Kidney (tissue), 22 donors: ENCODE measurements at regions of chr18 and their contacts with region 1.

Region 1: DNA sequence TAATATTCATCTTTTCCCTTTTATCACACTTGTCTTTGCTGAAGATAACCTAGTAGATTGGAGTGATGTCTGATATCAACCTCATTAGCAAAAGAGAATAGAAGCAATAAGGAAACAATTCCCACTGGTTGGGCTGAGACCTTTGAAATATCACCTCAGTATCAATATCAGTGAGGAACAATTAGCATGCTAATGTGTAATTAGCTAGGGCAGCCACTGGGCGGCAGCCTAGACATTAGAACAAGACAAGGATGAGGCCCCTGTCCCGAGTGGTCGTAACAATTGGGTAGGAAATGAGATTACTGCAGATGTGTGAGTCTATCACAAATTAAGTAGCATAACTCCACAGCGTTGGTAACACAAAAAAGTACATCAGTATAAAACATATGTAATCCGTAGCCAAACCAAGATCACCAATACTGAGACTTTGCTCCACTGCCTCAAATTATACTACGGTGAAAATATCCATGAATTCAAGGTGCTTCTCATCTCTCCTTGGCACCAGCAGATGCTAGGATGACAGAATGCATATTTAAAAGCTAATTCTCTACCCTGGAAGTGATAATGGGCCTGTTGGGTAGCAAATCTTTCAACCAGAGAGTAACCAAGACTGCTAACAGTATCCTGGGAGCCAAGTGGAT is 99.1 kb downstream of the ALPK2 start:
- DNase-seq: peak in 4 of 5 donors; percentile 44 to 67 (median 58)
- H3K4me3 ChIP-seq: no peak overlapping the region
- H3K27ac ChIP-seq: no peak overlapping the region
- H3K4me1 ChIP-seq: peaks cover 0 to 31% (median 7%) of the 10 kb centered on the region in 3 donors
- H3K27me3 ChIP-seq: no peaks in the 10 kb centered on the region
- CTCF ChIP-seq: peak; percentile 87

Region 2: DNA sequence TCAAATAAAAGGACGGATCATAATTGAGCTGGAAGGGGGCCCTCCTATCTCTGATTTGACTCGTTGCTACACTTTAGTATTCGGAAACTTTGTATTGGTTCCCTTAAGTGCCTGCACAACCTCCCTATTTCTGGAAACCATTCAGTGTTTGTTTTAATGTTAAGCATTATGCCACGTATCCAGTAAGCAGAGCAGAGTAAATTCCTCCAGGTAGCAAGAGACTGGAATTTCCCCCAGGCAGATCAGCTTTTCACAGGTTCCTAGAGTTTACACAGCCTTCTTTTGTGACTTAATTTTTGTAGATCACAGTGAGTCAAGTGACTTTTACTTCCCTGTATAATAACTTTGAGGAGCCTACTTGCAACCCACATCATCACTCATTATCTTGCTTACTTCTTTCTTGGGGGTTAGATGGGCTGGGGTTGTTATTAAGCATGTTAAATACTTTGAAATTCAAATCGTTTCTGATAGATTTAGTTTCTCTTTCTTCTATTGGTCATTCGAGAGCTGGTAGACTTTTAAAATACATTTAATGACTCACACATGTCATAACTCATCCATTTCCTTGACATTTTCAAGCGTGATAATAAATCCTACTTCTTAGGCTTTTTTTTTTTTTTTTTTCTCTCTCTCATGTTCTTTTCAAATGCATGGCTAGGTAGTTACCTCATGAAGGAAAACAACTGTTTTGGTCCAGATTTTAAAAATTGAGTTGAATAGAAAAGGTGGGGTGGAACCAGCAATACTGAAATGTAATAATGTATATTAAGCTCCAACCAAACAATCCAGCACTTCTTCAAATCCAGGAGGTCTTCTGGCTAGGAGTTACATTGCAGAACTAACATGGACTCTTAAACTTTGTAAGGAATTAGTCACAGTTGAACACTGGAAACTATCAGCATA is 266.5 kb before region 1 on chr18:
- intact Hi-C with region 1: no loop called
- DNase-seq: peak in 3 of 5 donors; percentile 36 to 80 (median 72)
- H3K4me3 ChIP-seq: peak overlapping the region in 1 of 3 donors; percentile 19
- H3K27ac ChIP-seq: peak overlapping the region; percentile 27 to 76
- H3K4me1 ChIP-seq: peaks cover 0 to 38% (median 11%) of the 10 kb centered on the region in 3 donors
- H3K27me3 ChIP-seq: no peaks in the 10 kb centered on the region
- CTCF ChIP-seq: no peak

Region 3: GRCh38 chr18:58578835-58579560 is 49.2 kb after region 1 on chr18:
- intact Hi-C with region 1: no loop called
- DNase-seq: no peak
- H3K4me3 ChIP-seq: peak overlapping the region in 2 of 3 donors; percentile 43 to 63
- H3K27ac ChIP-seq: peak overlapping the region; percentile 56 to 61
- H3K4me1 ChIP-seq: peaks cover 0 to 4% (median 0%) of the 10 kb centered on the region in 3 donors
- H3K27me3 ChIP-seq: no peaks in the 10 kb centered on the region
- CTCF ChIP-seq: no peak

Region 4: DNA sequence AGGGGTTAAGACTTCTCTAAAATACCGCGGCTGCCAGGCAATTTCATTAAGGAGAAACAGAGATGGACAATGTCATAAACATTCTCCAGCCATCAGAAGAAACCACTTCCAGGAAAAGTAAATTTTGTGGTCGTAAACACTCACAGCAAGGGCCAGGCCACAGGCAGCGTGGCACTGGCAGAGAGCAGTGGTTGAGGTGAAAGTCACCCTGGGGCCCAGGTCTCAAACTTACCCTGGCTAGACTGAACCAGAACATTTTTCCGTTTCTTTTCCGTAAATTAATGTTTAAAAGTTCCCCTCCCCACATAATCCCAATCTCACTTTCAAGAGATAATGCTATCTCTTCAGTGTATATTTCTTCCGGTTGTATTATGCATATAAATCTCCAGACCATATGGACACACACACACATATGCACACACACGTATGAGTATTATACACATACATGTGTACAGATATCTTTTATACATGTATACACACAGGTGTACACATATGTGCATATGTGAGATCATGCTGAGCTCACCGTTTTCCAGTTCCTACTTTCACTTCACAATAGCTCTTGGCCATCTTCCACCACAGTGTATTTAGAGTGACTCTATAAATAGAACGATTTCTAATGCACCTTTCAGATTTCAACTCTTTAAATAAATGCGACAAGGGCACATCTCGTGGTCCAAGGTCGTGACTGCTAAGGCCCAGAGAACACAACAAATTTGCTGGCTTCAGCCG is 231.6 kb after region 1 on chr18:
- intact Hi-C with region 1: loop called (anchors 5 kb)
- DNase-seq: peak in 1 of 5 donors; percentile 16
- H3K4me3 ChIP-seq: no peak overlapping the region
- H3K27ac ChIP-seq: peak overlapping the region; percentile 3 to 49
- H3K4me1 ChIP-seq: peaks cover 0 to 2% (median 0%) of the 10 kb centered on the region in 3 donors
- H3K27me3 ChIP-seq: no peaks in the 10 kb centered on the region
- CTCF ChIP-seq: no peak

Region 5: GRCh38 chr18:58792086-58792485 is 262.3 kb after region 1 on chr18:
- intact Hi-C with region 1: no loop called
- DNase-seq: no peak
- H3K4me3 ChIP-seq: no peak overlapping the region
- H3K27ac ChIP-seq: no peak overlapping the region
- H3K4me1 ChIP-seq: peaks cover 0 to 9% (median 0%) of the 10 kb centered on the region in 3 donors
- H3K27me3 ChIP-seq: no peaks in the 10 kb centered on the region
- CTCF ChIP-seq: no peak